OCI-LY7 (cell line): ENCODE measurements at regions of chr17 and their contacts with region 1.

Region 1: GRCh38 chr17:20315821-20316220 is 151.5 kb downstream of the LGALS9B start:
- DNase-seq: no peak
- H3K4me3 ChIP-seq: no peak overlapping the region
- H3K27ac ChIP-seq: no peak overlapping the region
- H3K4me1 ChIP-seq: no peaks in the 10 kb centered on the region
- CTCF ChIP-seq: no peak

Region 2: DNA sequence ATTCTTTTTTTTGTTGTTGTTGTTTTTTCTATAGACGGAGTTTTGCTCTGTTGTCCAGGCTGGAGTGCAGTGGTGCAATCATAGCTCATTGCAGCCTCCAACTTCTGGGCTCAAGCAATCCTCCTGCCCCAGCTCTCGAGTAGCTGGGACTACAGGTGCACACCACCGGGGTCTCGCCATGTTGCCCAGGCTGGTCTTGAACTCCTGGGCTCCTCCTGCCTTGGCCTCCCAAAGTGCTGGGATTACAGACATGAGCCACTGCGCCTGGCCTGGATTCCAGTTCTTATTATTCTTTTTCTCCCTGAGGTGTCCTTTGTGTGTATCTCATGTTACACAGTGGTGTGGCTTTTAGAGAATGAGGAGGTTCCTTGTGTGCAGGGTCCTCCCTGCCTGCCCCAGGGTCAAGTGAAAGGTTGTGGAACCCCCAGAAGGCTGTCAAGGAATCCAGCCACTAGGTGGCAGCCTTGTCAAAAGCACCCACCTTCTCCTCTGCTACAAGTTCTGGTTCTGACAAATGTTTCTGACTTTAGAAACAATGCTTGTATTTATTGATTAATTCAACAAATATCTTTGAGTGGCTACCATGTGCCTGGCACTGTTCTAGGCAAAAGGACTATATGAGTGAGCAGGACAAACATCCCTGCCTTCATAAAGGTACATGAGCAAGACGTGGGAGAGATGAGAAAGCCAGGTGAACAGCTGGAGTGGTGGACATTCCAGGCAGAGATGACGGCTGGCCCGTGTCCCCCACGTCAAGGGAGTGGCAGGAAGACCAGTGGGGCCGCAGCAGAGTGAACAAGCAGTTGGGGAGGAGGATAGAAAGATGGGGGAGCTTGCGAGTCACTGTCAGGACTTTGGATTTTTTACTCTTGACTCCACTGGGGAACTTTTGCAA is 194.2 kb before region 1 on chr17:
- CTCF ChIA-PET with region 1: no interaction called
- POLR2A ChIA-PET with region 1: no interaction called
- intact Hi-C with region 1: loop called (anchors 2 kb)
- DNase-seq: peak; percentile 60
- H3K4me3 ChIP-seq: no peak overlapping the region
- H3K27ac ChIP-seq: no peak overlapping the region
- H3K4me1 ChIP-seq: no peaks in the 10 kb centered on the region
- CTCF ChIP-seq: peak; percentile 94

Region 3: GRCh38 chr17:20234276-20234675 is 81.5 kb before region 1 on chr17:
- CTCF ChIA-PET with region 1: no interaction called
- POLR2A ChIA-PET with region 1: no interaction called
- intact Hi-C with region 1: no loop called
- DNase-seq: no peak
- H3K4me3 ChIP-seq: no peak overlapping the region
- H3K27ac ChIP-seq: no peak overlapping the region
- H3K4me1 ChIP-seq: no peaks in the 10 kb centered on the region
- CTCF ChIP-seq: no peak

Region 4: DNA sequence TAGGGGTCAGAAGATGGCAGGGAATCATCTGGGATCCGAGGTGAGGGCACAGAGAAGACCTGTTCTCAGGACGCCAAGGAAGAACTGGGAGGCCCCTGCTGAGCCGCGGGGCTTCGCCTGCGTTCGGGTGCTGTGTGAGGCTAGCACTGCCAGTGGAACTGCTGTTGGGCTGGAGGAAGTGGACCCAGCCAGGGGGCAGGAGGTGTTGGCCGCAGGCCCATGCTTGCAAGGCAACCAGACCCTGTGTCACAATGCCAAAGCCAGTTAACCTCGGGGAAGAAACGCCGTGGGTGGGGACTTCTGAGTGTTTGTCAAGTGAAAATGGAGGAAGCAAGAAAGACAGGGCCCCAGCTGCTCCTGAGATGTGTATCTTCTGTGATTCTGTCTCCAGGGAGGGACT is 34.0 kb before region 1 on chr17:
- CTCF ChIA-PET with region 1: no interaction called
- POLR2A ChIA-PET with region 1: no interaction called
- intact Hi-C with region 1: no loop called
- DNase-seq: no peak
- H3K4me3 ChIP-seq: no peak overlapping the region
- H3K27ac ChIP-seq: no peak overlapping the region
- H3K4me1 ChIP-seq: no peaks in the 10 kb centered on the region
- CTCF ChIP-seq: no peak